ENCODE measurements at regions of chr18 and their contacts with region 1.

Region 1: GRCh38 chr18:3525870-3526420 is 76.0 kb downstream of the TGIF1 start:
- DNase-seq: peak; percentile 43 to 67 (median 50)
- ATAC-seq: peak; percentile 76
- H3K4me3 ChIP-seq: no peak overlapping the region
- H3K27ac ChIP-seq: peak overlapping the region; percentile 43
- H3K4me1 ChIP-seq: peaks cover 19 to 31% of the 10 kb centered on the region in 2 experiments; a peak in 3 of 5 replicates
- H3K27me3 ChIP-seq: no peaks in the 10 kb centered on the region
- CTCF ChIP-seq: no peak
- EP300 ChIP-seq: no peak
- POLR2A ChIP-seq: no peak
- RAD21 ChIP-seq: peak in 1 of 2 experiments; percentile 28; a peak in 1 of 4 replicates

Region 2: DNA sequence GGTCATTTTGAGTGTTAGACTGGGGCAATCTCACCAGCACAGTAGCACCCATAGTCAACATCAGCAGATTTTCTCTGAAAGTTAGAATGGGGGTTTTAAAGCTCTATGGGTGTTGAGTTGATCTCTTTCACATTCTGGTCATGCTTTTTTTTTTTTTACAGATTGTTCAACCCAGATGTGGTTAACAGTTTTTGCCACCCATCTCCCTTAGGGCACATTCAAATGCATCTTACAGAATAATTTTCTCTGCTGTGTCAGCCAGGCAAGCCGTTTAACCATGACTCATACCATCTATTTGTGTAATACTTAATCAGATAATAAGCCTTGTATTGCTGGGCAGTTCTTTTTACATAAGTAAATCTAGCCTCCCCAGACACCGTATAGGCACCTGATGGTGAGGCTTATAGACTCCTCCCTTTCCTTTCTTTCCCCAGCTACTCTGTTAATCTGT is 14.0 kb before region 1 on chr18:
- CTCF ChIA-PET with region 1: no interaction called
- POLR2A ChIA-PET with region 1: interaction called, 13 read pairs
- in situ Hi-C with region 1: no loop called
- intact Hi-C with region 1: no loop called
- DNase-seq: peak in 2 of 4 experiments; percentile 64 to 66
- ATAC-seq: peak; percentile 83
- H3K4me3 ChIP-seq: no peak overlapping the region
- H3K27ac ChIP-seq: peak overlapping the region; percentile 11; the same call in 1 of the 3 replicates
- H3K4me1 ChIP-seq: peaks cover 3 to 14% of the 10 kb centered on the region in 2 experiments; a peak in 4 of 5 replicates
- H3K27me3 ChIP-seq: no peaks in the 10 kb centered on the region
- CTCF ChIP-seq: no peak
- EP300 ChIP-seq: peak; percentile 86
- POLR2A ChIP-seq: no peak
- RAD21 ChIP-seq: no peak

Region 3: DNA sequence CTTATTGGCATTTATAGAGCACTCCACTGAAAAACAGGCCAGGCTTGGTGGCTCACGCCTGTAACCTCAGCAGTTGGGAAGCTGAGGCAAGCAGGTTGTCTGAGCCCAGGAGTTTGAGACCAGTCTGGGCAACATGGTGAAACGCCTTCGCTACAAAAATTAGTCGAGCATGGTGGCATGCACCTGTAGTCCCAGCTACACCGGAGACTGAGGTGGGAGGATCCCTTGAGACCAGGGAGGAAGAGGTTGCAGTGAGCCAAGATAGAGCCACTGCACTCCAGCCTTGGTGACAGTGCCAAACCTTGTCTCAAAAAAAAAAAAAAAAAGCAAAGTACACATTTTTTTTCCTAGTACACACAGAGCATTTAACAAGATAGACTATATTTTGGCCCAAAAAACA is 20.2 kb after region 1 on chr18:
- CTCF ChIA-PET with region 1: no interaction called
- POLR2A ChIA-PET with region 1: interaction called, 18 read pairs
- in situ Hi-C with region 1: no loop called
- intact Hi-C with region 1: no loop called
- DNase-seq: no peak
- ATAC-seq: no peak
- H3K4me3 ChIP-seq: no peak overlapping the region
- H3K27ac ChIP-seq: no peak overlapping the region
- H3K4me1 ChIP-seq: peaks cover 0 to 10% of the 10 kb centered on the region in 2 experiments; a peak in 2 of 5 replicates
- H3K27me3 ChIP-seq: no peaks in the 10 kb centered on the region
- CTCF ChIP-seq: no peak
- EP300 ChIP-seq: no peak
- POLR2A ChIP-seq: no peak
- RAD21 ChIP-seq: no peak

Region 4: GRCh38 chr18:3585656-3586509 is 59.9 kb after region 1 on chr18:
- CTCF ChIA-PET with region 1: no interaction called
- POLR2A ChIA-PET with region 1: interaction called, 3 read pairs
- in situ Hi-C with region 1: no loop called
- intact Hi-C with region 1: loop called (anchors 2 kb)
- DNase-seq: peak; percentile 90 to 98 (median 93)
- ATAC-seq: peak; percentile 96
- H3K4me3 ChIP-seq: no peak overlapping the region
- H3K27ac ChIP-seq: peak overlapping the region; percentile 64
- H3K4me1 ChIP-seq: peaks cover 25 to 32% of the 10 kb centered on the region in 2 experiments
- H3K27me3 ChIP-seq: no peaks in the 10 kb centered on the region
- CTCF ChIP-seq: peak; percentile 94 to 98 (median 98)
- EP300 ChIP-seq: peak; percentile 77
- POLR2A ChIP-seq: no peak
- RAD21 ChIP-seq: peak; percentile 96 to 97

Region 5: GRCh38 chr18:3760741-3761140 is 234.8 kb after region 1 on chr18:
- CTCF ChIA-PET with region 1: no interaction called
- POLR2A ChIA-PET with region 1: no interaction called
- in situ Hi-C with region 1: no loop called
- intact Hi-C with region 1: no loop called
- DNase-seq: no peak
- ATAC-seq: no peak
- H3K4me3 ChIP-seq: no peak overlapping the region
- H3K27ac ChIP-seq: no peak overlapping the region
- H3K4me1 ChIP-seq: no peaks in the 10 kb centered on the region
- H3K27me3 ChIP-seq: peaks cover 17 to 18% of the 10 kb centered on the region in 2 experiments; a peak in 3 of 5 replicates
- CTCF ChIP-seq: no peak
- EP300 ChIP-seq: no peak
- POLR2A ChIP-seq: no peak
- RAD21 ChIP-seq: no peak

Measured in K562 (cell line).